Mammary epithelial cell (primary cell): ENCODE measurements at regions of chr12 and their contacts with region 1.

Region 1: DNA sequence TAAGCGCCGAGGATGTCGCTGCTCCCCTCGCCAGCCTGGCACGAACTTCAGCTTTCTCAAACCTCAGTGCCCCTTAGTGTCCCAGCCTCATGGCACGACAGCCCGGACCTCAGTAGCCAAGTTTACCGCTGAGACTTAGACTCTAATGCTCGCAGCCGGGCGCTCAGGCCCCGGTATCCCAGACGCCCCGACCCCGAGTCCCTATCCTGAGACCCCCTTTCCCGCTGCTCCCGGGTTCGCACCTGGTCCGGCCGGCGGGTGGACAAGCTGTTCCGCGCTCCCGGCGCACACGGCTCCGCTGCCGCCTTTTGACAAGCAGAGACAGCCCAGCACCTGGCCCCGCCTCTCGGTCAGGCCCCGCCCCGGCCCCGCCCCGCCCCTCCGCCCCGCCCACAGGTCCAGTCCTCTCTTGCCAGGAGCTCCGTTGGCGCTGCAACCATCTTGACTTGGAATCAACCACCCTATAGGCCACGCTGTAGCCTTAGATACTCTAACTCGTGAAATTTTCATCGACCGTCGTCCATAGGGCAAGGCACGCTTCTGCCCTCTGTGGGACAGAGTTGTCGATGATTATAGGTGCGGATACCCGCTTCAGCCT is at the start of gene VDR:
- DNase-seq: peak; percentile 83
- H3K4me3 ChIP-seq: peak within 1 kb of the TSS; percentile 69 to 84 (median 73)
- H3K27ac ChIP-seq: peak within 1 kb of the TSS; percentile 58
- H3K4me1 ChIP-seq: peaks cover 49% of the 10 kb centered on the region
- H3K27me3 ChIP-seq: no peaks in the 10 kb centered on the region
- CTCF ChIP-seq: peak; percentile 15 to 49
- total RNA-seq, gene VDR: 71.8 to 89.5 TPM

Region 2: GRCh38 chr12:47863467-47863866 is 41.3 kb before region 1 on chr12:
- CTCF ChIA-PET with region 1: interaction called, 3 read pairs
- dilution Hi-C with region 1: no loop called
- in situ Hi-C with region 1: no loop called
- intact Hi-C with region 1: loop called (anchors 2 kb)
- DNase-seq: peak; percentile 91
- H3K4me3 ChIP-seq: no peak overlapping the region
- H3K27ac ChIP-seq: peak overlapping the region; percentile 76
- H3K4me1 ChIP-seq: peaks cover 46% of the 10 kb centered on the region
- H3K27me3 ChIP-seq: no peaks in the 10 kb centered on the region
- CTCF ChIP-seq: no peak

Region 3: DNA sequence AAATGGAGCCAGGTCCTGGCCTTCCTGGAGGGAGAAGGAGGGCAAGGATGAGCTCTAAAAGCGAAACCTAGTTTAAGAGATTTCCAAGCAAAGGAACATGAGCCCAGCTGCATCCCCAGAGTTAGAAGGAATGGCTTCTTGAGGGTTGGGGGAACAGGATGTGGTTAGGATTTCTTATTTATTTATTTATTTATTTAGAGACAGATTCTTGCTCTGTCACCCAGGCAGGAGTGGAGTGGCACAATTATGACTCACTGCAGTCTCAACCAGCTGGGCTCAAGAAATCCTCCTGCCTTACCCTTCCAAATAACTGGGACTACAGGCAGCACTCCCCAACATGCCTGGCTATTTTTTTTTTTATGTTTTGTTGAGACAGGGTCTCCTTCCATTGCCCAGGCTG is 33.3 kb after region 1 on chr12:
- CTCF ChIA-PET with region 1: interaction called, 15 read pairs
- dilution Hi-C with region 1: no loop called
- in situ Hi-C with region 1: no loop called
- intact Hi-C with region 1: no loop called
- DNase-seq: peak; percentile 29
- H3K4me3 ChIP-seq: no peak overlapping the region
- H3K27ac ChIP-seq: no peak overlapping the region
- H3K4me1 ChIP-seq: peaks cover 10% of the 10 kb centered on the region
- H3K27me3 ChIP-seq: no peaks in the 10 kb centered on the region
- CTCF ChIP-seq: no peak

Region 4: DNA sequence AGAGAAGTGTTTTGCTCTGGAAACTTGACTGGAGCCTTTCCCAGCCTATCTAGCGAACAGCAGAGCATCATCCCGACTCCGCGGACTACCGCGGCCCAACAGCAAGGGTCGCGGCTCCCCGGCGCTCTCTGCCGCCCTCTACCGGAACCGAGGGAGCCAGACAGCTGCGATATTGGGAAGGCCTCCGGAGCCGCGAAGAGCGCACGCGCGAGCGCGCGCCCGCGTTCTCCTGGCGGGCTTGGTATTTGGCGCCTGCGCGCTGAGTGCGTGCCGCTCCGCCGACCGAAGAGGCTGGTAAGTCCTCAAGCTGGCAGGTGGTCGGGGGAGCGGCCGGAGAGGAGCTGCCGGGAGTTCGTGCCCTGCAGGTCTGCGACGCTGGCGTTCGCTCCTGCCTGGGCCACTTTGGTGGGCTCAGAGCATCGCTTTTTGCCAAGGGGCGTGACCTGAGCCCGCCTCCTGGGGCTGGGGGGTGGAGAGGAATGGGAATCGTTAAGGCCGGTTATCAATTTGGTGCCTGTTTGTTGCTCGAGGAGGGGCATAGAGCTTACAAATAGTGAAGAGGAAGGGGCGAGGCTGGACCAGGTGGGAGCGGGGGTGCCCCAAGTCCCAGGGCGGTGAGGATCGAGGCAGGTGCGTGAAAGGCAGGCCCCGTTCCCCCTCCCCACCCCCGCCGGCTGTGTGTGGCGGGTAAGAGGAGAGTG is 58.7 kb after region 1 on chr12 and contains the start of gene TMEM106C:
- CTCF ChIA-PET with region 1: interaction called, 4 read pairs
- dilution Hi-C with region 1: no loop called
- in situ Hi-C with region 1: no loop called
- intact Hi-C with region 1: loop called (anchors 1 kb)
- DNase-seq: peak; percentile 82
- H3K4me3 ChIP-seq: peak within 1 kb of the TSS; percentile 60 to 71 (median 70)
- H3K27ac ChIP-seq: no peak within 1 kb of the TSS
- H3K4me1 ChIP-seq: peaks cover 15% of the 10 kb centered on the region
- H3K27me3 ChIP-seq: no peaks in the 10 kb centered on the region
- CTCF ChIP-seq: peak; percentile 84 to 100
- total RNA-seq, gene TMEM106C: 82.5 to 90.2 TPM

Region 5: DNA sequence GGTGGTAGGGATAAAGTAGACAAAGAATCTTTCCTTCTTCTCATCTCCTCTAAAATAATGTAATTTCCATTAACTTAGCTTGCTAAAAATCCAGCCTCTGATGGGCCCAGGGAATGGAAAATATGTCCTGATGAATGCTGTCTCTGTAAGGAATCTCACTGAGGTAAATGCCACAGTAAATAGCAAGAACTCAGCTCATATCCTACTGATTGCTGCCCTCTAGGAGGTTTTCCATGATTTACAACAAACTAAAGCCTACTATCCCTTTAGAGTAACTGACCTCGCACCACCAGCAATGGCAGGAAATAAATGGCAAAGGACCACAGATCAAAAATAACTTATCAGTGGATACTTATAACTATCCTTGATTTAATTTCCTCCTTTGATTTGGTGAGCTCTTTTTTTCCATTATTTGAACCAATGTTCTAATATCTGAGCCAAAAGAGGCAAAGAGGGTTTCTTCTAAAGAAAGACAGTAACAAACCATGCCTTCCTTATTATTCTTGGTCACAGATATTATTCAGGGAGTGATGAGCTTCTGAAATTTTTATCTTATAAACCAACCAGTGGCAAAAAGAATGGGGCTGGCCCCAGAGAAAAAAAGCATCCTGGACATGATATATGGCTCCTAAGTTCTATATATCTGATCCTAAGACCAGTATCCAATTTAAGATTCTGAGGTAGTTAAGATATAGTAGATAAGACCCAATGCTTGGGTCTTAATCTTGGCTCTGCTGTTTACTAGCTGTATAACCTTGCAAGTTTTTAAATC is 157.3 kb after region 1 on chr12:
- CTCF ChIA-PET with region 1: no interaction called
- dilution Hi-C with region 1: no loop called
- in situ Hi-C with region 1: no loop called
- intact Hi-C with region 1: loop called (anchors 1 kb)
- DNase-seq: peak; percentile 14
- H3K4me3 ChIP-seq: no peak overlapping the region
- H3K27ac ChIP-seq: no peak overlapping the region
- H3K4me1 ChIP-seq: no peaks in the 10 kb centered on the region
- H3K27me3 ChIP-seq: no peaks in the 10 kb centered on the region
- CTCF ChIP-seq: peak; percentile 11 to 35